ENCODE measurements at regions of chr20 and their contacts with region 1.

Region 1: DNA sequence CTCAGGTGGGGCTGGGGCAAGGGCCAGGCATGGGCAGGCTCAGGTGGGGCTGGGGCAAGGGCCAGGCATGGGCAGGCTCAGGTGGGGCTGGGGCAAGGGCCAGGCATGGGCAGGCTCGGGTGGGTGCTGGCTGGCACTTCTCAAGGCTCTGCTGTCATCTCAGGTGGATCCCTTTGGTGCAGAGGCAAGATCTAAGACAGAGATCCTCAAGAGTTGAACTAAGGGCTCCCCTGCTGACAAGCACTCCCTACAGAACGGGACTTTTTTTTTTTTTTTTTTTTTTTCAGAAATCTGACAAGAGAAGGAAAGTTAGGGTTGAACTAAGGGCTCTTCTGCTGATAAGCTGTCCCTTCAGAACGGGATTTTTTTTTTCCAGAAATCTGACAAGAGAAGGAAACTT is 24.9 kb downstream of the MMP24OS start:
- DNase-seq: no peak
- ATAC-seq: no peak
- H3K4me3 ChIP-seq: no peak overlapping the region
- H3K4me3 Mint-ChIP-seq: no peak overlapping the region
- H3K27ac ChIP-seq: no peak overlapping the region
- H3K27ac Mint-ChIP-seq: no peak overlapping the region
- H3K4me1 ChIP-seq: peaks cover 21 to 24% of the 10 kb centered on the region in 2 donors
- H3K4me1 Mint-ChIP-seq: peaks cover 23% of the 10 kb centered on the region
- H3K27me3 ChIP-seq: no peaks in the 10 kb centered on the region
- H3K27me3 Mint-ChIP-seq: no peaks in the 10 kb centered on the region
- CTCF ChIP-seq: no peak

Region 2: DNA sequence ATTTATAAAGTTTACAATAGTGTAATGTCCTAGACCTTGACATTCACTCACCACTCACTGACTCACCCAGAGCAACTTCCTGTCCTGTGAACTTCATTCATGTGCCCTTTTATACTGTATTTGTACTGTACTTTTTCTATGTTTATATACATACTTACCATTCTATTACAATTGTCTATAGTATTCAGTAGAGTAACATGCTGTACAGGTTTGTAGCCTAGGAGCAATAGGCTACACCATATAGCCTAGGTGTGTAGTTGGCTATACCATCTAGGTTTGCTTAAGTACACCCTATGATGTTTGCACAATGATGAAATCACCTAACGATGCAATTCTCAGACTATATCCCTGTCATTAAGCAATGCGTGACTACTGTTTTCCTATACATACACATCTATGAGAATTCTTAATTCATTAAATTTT is 123.4 kb before region 1 on chr20:
- CTCF ChIA-PET with region 1: no interaction called
- POLR2A ChIA-PET with region 1: no interaction called
- intact Hi-C with region 1: no loop called
- DNase-seq: no peak
- ATAC-seq: no peak
- H3K4me3 ChIP-seq: no peak overlapping the region
- H3K4me3 Mint-ChIP-seq: no peak overlapping the region
- H3K27ac ChIP-seq: no peak overlapping the region
- H3K27ac Mint-ChIP-seq: no peak overlapping the region
- H3K4me1 ChIP-seq: no peaks in the 10 kb centered on the region
- H3K4me1 Mint-ChIP-seq: no peaks in the 10 kb centered on the region
- H3K27me3 ChIP-seq: no peaks in the 10 kb centered on the region
- H3K27me3 Mint-ChIP-seq: no peaks in the 10 kb centered on the region
- CTCF ChIP-seq: no peak

Region 3: GRCh38 chr20:35801865-35802264 is 548.9 kb after region 1 on chr20:
- CTCF ChIA-PET with region 1: no interaction called
- POLR2A ChIA-PET with region 1: interaction called, 10 read pairs
- intact Hi-C with region 1: no loop called
- DNase-seq: no peak
- ATAC-seq: no peak
- H3K4me3 ChIP-seq: no peak overlapping the region
- H3K4me3 Mint-ChIP-seq: no peak overlapping the region
- H3K27ac ChIP-seq: peak overlapping the region in 1 of 2 donors; percentile 52
- H3K27ac Mint-ChIP-seq: peak overlapping the region; percentile 6
- H3K4me1 ChIP-seq: peaks cover 4 to 5% of the 10 kb centered on the region in 2 donors
- H3K4me1 Mint-ChIP-seq: peaks cover 3% of the 10 kb centered on the region
- H3K27me3 ChIP-seq: no peaks in the 10 kb centered on the region
- H3K27me3 Mint-ChIP-seq: no peaks in the 10 kb centered on the region
- CTCF ChIP-seq: no peak

Measured in B cell (primary cell).